ENCODE measurements at regions of chr1 and their contacts with region 1.

Region 1: GRCh38 chr1:209747580-209748262 is 8.1 kb upstream of the TRAF3IP3 start:
- DNase-seq: peak; percentile 93
- H3K4me3 ChIP-seq: no peak overlapping the region
- H3K27ac ChIP-seq: no peak overlapping the region
- H3K4me1 ChIP-seq: no peaks in the 10 kb centered on the region
- H3K27me3 ChIP-seq: peaks cover 0 to 5% of the 10 kb centered on the region in 2 experiments
- CTCF ChIP-seq: peak; percentile 80 to 97
- POLR2A ChIP-seq: no peak

Region 2: GRCh38 chr1:209601809-209602657 is 145.7 kb before region 1 on chr1:
- CTCF ChIA-PET with region 1: interaction called, 3 read pairs
- POLR2A ChIA-PET with region 1: no interaction called
- dilution Hi-C with region 1: no loop called
- intact Hi-C with region 1: loop called (anchors 1 kb)
- DNase-seq: peak; percentile 45
- H3K4me3 ChIP-seq: no peak overlapping the region
- H3K27ac ChIP-seq: no peak overlapping the region
- H3K4me1 ChIP-seq: peaks cover 5% of the 10 kb centered on the region
- H3K27me3 ChIP-seq: peaks cover 3 to 18% of the 10 kb centered on the region in 2 experiments
- CTCF ChIP-seq: peak; percentile 62 to 66
- POLR2A ChIP-seq: no peak

Region 3: DNA sequence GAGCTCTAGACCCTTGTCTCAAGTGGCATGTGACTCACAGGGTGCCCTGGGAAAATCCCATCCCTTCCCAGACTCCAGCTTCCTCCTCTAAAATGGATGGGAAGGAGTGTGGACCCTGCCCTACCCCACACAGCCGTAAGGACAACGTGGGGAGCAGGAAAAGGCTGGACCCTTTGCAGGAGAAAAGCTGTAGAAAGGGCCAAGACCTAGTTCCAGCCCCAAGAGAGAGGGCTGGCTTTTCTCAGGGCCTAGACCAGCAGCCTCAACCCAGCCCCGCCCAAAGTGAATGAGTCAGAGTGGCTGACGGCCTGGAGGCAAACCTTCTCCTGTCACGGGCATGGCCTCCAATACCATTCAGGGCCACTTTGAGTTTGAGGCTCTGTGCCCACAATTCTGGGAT is 96.6 kb before region 1 on chr1:
- CTCF ChIA-PET with region 1: no interaction called
- POLR2A ChIA-PET with region 1: no interaction called
- dilution Hi-C with region 1: no loop called
- intact Hi-C with region 1: loop called (anchors 2 kb)
- DNase-seq: peak; percentile 77
- H3K4me3 ChIP-seq: no peak overlapping the region
- H3K27ac ChIP-seq: peak overlapping the region; percentile 60
- H3K4me1 ChIP-seq: peaks cover 27% of the 10 kb centered on the region
- H3K27me3 ChIP-seq: no peaks in the 10 kb centered on the region
- CTCF ChIP-seq: no peak
- POLR2A ChIP-seq: no peak

Region 4: DNA sequence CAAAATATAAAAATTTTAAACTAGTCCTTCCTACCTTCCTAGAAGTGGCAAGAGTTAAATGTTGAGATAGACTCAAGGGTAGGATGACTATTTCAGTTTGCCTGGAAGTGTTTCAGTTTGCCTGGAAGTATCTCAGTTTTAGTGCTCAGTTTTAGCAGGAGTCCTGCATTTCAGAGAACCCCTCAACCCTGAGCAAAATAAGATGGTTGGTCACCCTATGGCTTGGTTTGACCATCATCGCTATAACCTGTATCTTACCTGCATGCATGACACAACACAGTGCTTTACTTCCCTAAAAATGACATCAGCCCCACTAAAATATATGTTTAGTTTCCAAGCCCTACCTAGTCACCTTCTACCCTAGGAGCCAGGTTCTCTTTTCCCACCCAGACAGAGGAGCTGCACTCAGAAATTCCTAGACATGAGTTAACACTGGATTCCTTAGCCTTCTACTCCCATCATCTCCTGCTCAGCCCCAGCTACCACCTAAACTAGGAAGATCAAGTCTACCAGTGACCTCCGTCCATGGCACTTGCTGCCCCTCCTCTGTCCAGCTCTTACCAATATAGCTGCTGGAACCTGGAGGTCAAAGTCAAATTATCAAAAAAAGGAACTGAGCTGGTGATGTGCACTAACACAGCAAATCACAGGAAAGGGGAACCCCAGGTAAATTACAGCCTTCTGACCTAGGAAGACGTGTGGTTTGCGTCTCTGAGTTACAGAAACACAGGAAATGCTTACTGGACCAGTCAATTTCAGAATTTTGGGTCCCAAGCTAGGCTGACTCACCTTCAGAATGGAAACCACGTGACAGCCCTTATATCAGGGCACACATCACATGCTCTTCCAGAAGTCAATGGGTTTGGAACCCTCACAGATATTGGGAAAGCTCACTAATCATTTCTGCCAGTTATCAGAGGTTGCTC is 74.8 kb before region 1 on chr1:
- CTCF ChIA-PET with region 1: no interaction called
- POLR2A ChIA-PET with region 1: no interaction called
- dilution Hi-C with region 1: no loop called
- intact Hi-C with region 1: no loop called
- DNase-seq: no peak
- H3K4me3 ChIP-seq: no peak overlapping the region
- H3K27ac ChIP-seq: no peak overlapping the region
- H3K4me1 ChIP-seq: peaks cover 6% of the 10 kb centered on the region
- H3K27me3 ChIP-seq: peaks cover 32 to 56% of the 10 kb centered on the region in 2 experiments
- CTCF ChIP-seq: no peak
- POLR2A ChIP-seq: no peak

Region 5: GRCh38 chr1:209761011-209761635 is 13.4 kb after region 1 on chr1:
- CTCF ChIA-PET with region 1: interaction called, 19 read pairs
- POLR2A ChIA-PET with region 1: no interaction called
- dilution Hi-C with region 1: no loop called
- intact Hi-C with region 1: no loop called
- DNase-seq: no peak
- H3K4me3 ChIP-seq: no peak overlapping the region
- H3K27ac ChIP-seq: no peak overlapping the region
- H3K4me1 ChIP-seq: no peaks in the 10 kb centered on the region
- H3K27me3 ChIP-seq: peaks cover 4 to 11% of the 10 kb centered on the region in 2 experiments
- CTCF ChIP-seq: no peak
- POLR2A ChIP-seq: no peak

Region 6: DNA sequence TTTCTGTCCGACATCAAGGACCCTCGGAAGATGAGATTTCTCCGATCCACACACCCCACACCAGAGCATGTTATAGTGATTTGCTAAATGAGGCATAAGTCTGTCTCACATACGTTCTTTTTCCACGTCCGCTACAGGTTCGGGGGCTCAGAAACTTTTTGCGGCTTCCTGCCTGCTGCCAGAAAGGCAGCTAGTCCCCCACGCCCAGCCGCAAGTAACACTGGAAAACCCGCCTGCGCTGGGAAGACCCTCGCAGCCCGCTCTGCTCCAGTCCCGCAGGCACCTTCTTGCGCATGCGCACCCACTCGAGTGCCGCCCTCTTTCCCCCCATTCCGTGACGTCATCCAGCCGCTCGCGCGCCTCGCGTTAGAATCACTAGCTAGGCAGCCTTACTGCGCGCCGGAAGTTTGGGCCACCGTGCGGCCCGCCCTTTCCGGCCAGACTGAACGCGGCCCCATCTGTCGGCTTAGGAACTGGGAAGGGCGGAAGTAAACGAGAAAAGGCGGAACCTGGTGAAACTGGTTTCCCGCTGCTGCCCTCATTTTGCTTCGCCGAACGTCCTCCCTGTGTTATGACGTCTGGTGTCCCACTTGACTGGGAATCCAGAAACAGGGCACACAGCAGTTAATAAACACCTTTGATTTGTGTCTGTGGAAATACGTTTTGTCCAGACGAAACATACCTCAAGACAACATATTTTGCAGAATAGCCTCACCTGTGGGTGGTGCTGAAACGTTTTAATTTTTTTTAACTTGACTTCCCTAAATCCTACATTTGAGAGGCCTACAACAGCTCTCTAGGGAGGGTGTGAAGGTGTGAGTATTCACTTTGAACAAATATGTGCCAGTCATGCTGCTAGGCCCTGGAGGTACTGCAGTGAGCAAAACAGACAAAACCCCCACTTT is 36.8 kb after region 1 on chr1 and contains the start of gene C1orf74:
- CTCF ChIA-PET with region 1: no interaction called
- POLR2A ChIA-PET with region 1: no interaction called
- dilution Hi-C with region 1: no loop called
- intact Hi-C with region 1: loop called (anchors 1 kb)
- DNase-seq: peak; percentile 99
- H3K4me3 ChIP-seq: peak within 1 kb of the TSS; percentile 62 to 90 (median 75)
- H3K27ac ChIP-seq: peak within 1 kb of the TSS; percentile 74
- H3K4me1 ChIP-seq: peaks cover 10% of the 10 kb centered on the region
- H3K27me3 ChIP-seq: no peaks in the 10 kb centered on the region
- CTCF ChIP-seq: no peak
- POLR2A ChIP-seq: peak; percentile 97
- total RNA-seq, gene C1orf74: 2.3 and 3.0 TPM in 2 replicates